ENCODE measurements at regions of chr2 and their contacts with region 1.

Region 1: GRCh38 chr2:222760301-222760897 is 88.9 kb downstream of the MOGAT1 start:
- DNase-seq: no peak
- ATAC-seq: no peak
- H3K4me3 Mint-ChIP-seq: no peak overlapping the region
- H3K27ac Mint-ChIP-seq: no peak overlapping the region
- H3K4me1 Mint-ChIP-seq: no peaks in the 10 kb centered on the region
- H3K27me3 Mint-ChIP-seq: peaks cover 5% of the 10 kb centered on the region

Region 2: GRCh38 chr2:222876947-222877346 is 116.5 kb after region 1 on chr2:
- CTCF ChIA-PET with region 1: no interaction called
- POLR2A ChIA-PET with region 1: interaction called, 11 read pairs
- intact Hi-C with region 1: no loop called
- DNase-seq: no peak
- ATAC-seq: no peak
- H3K4me3 Mint-ChIP-seq: no peak overlapping the region
- H3K27ac Mint-ChIP-seq: no peak overlapping the region
- H3K4me1 Mint-ChIP-seq: peaks cover 42% of the 10 kb centered on the region
- H3K27me3 Mint-ChIP-seq: no peaks in the 10 kb centered on the region

Measured in activated CD4-positive, alpha-beta T cell treated with anti-CD3 and anti-CD28 coated beads for 36 hours (primary cell).